Activated CD8-positive, alpha-beta memory T cell treated with anti-CD3 and anti-CD28 coated beads, Interleukin-2, amount 10 ng/mL, durations not matched to agents 7 days and 5 days (primary cell): ENCODE measurements at regions of chr6 and their contacts with region 1.

Region 1: GRCh38 chr6:160520043-160520904 is 143.8 kb downstream of the LPA start:
- DNase-seq: peak; percentile 83
- ATAC-seq: peak; percentile 87
- H3K4me3 Mint-ChIP-seq: peak overlapping the region; percentile 88
- H3K27ac Mint-ChIP-seq: peak overlapping the region; percentile 93
- H3K4me1 Mint-ChIP-seq: peaks cover 57% of the 10 kb centered on the region
- H3K27me3 Mint-ChIP-seq: peaks cover 2% of the 10 kb centered on the region

Region 2: DNA sequence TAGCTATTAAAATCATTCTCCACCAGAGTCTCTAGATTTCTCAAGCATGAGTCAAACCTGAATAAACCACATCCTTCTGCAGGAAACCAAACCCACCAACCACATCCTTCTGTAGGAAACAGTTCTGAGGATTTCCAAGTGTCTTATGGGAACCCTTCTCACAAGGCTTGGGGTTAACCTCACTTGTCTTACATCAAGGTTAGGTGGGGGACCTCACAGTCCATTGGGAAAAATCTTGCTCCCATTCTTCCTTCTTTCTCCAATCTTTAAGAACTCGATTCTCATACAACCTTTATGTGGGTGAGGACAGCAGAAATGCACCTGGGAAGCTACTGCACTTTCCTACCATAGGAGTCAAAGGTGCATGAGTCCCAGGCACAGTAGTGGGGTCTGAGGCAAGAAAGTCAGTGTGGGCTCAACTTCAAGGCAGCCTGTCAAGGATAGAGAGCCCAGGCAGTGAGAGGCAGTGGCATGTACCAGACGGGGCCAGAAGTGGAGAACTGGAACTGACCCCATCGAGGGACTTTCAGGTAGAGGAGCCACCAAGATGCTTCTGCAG is 57.6 kb before region 1 on chr6:
- CTCF ChIA-PET with region 1: interaction called, 25 read pairs
- DNase-seq: peak; percentile 88
- ATAC-seq: peak; percentile 82
- H3K4me3 Mint-ChIP-seq: no peak overlapping the region
- H3K27ac Mint-ChIP-seq: peak overlapping the region; percentile 61
- H3K4me1 Mint-ChIP-seq: peaks cover 51% of the 10 kb centered on the region
- H3K27me3 Mint-ChIP-seq: peaks cover 6% of the 10 kb centered on the region

Region 3: GRCh38 chr6:160500639-160501038 is 19.6 kb before region 1 on chr6:
- CTCF ChIA-PET with region 1: interaction called, 39 read pairs
- DNase-seq: peak; percentile 84
- ATAC-seq: peak; percentile 88
- H3K4me3 Mint-ChIP-seq: no peak overlapping the region
- H3K27ac Mint-ChIP-seq: peak overlapping the region; percentile 94
- H3K4me1 Mint-ChIP-seq: peaks cover 35% of the 10 kb centered on the region
- H3K27me3 Mint-ChIP-seq: no peaks in the 10 kb centered on the region

Region 4: DNA sequence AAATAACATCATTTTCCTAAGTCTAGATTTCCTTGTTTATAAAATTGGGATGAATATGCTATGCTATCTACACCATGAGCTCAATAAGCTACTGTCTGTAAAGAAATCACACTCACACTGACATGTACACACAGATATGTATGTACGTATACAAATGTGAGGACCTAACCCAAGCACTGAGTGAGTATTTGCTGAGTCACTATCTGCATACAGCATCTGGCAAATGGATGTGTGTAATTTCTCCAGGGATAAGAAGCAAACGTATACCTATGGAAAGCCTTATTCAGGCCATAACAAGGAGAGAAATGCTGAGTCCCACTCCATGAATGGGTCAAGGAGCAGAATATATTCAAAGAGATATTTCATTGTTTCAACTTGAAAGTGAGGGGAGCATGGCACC is 10.1 kb before region 1 on chr6:
- CTCF ChIA-PET with region 1: interaction called, 10 read pairs
- DNase-seq: no peak
- ATAC-seq: no peak
- H3K4me3 Mint-ChIP-seq: no peak overlapping the region
- H3K27ac Mint-ChIP-seq: no peak overlapping the region
- H3K4me1 Mint-ChIP-seq: peaks cover 10% of the 10 kb centered on the region
- H3K27me3 Mint-ChIP-seq: peaks cover 13% of the 10 kb centered on the region

Region 5: GRCh38 chr6:160534050-160534696 is 13.9 kb after region 1 on chr6:
- CTCF ChIA-PET with region 1: interaction called, 138 read pairs
- DNase-seq: peak; percentile 66
- ATAC-seq: peak; percentile 79
- H3K4me3 Mint-ChIP-seq: no peak overlapping the region
- H3K27ac Mint-ChIP-seq: no peak overlapping the region
- H3K4me1 Mint-ChIP-seq: no peaks in the 10 kb centered on the region
- H3K27me3 Mint-ChIP-seq: peaks cover 11% of the 10 kb centered on the region